CD4-positive, alpha-beta T cell (primary cell): ENCODE measurements at regions of chr3 and their contacts with region 1.

Region 1: GRCh38 chr3:141498598-141499223 is 11.9 kb downstream of the RASA2 start:
- DNase-seq: peak; percentile 64 to 97 (median 78)
- ATAC-seq: peak; percentile 87
- H3K4me3 ChIP-seq: peak overlapping the region; percentile 45
- H3K4me3 Mint-ChIP-seq: peak overlapping the region; percentile 86
- H3K27ac ChIP-seq: peak overlapping the region; percentile 77 to 90
- H3K27ac Mint-ChIP-seq: no peak overlapping the region
- H3K4me1 ChIP-seq: peaks cover 28% of the 10 kb centered on the region
- H3K4me1 Mint-ChIP-seq: peaks cover 69% of the 10 kb centered on the region
- H3K27me3 ChIP-seq: no peaks in the 10 kb centered on the region
- H3K27me3 Mint-ChIP-seq: no peaks in the 10 kb centered on the region
- CTCF ChIP-seq: no peak

Region 2: DNA sequence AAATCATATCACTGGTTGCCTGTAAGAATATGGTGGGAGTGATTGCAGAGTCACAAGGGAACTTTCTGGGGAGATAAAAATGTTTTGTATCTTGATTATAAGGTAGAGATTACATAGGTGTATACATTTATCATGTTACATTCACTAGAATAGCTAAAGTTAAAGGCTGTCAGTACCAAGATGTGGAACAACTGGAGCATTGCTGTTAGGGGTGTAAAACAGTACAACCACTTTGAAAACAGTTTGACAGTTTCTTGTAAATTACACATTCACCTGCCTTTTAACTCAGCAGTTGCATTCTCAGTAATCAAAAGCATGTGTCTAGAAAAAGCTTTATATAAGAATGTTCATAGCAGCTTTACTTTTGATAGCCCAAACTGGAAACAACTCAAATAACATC is 15.7 kb after region 1 on chr3:
- CTCF ChIA-PET with region 1: interaction called, 7 read pairs
- POLR2A ChIA-PET with region 1: interaction called, 16 read pairs
- intact Hi-C with region 1: loop called in 1 of 2 experiments (anchors 2 kb)
- DNase-seq: no peak
- ATAC-seq: no peak
- H3K4me3 ChIP-seq: no peak overlapping the region
- H3K4me3 Mint-ChIP-seq: no peak overlapping the region
- H3K27ac ChIP-seq: no peak overlapping the region
- H3K27ac Mint-ChIP-seq: peak overlapping the region; percentile 54
- H3K4me1 ChIP-seq: peaks cover 13% of the 10 kb centered on the region
- H3K4me1 Mint-ChIP-seq: peaks cover 75% of the 10 kb centered on the region
- H3K27me3 ChIP-seq: no peaks in the 10 kb centered on the region
- H3K27me3 Mint-ChIP-seq: no peaks in the 10 kb centered on the region
- CTCF ChIP-seq: no peak

Region 3: GRCh38 chr3:141523615-141524375 is 25.1 kb after region 1 on chr3:
- CTCF ChIA-PET with region 1: interaction called, 6 read pairs
- POLR2A ChIA-PET with region 1: interaction called, 19 read pairs
- intact Hi-C with region 1: loop called in 1 of 2 experiments (anchors 2 kb)
- DNase-seq: no peak
- ATAC-seq: no peak
- H3K4me3 ChIP-seq: no peak overlapping the region
- H3K4me3 Mint-ChIP-seq: no peak overlapping the region
- H3K27ac ChIP-seq: no peak overlapping the region
- H3K27ac Mint-ChIP-seq: peak overlapping the region; percentile 94
- H3K4me1 ChIP-seq: peaks cover 25% of the 10 kb centered on the region
- H3K4me1 Mint-ChIP-seq: peaks cover 90% of the 10 kb centered on the region
- H3K27me3 ChIP-seq: no peaks in the 10 kb centered on the region
- H3K27me3 Mint-ChIP-seq: no peaks in the 10 kb centered on the region
- CTCF ChIP-seq: no peak

Region 4: GRCh38 chr3:141530133-141530768 is 31.5 kb after region 1 on chr3:
- CTCF ChIA-PET with region 1: no interaction called
- POLR2A ChIA-PET with region 1: interaction called, 22 read pairs
- intact Hi-C with region 1: loop called in 1 of 2 experiments (anchors 2 kb)
- DNase-seq: peak in 8 of 14 experiments; percentile 6 to 71 (median 24)
- ATAC-seq: peak; percentile 81
- H3K4me3 ChIP-seq: peak overlapping the region; percentile 13
- H3K4me3 Mint-ChIP-seq: peak overlapping the region; percentile 86
- H3K27ac ChIP-seq: peak overlapping the region; percentile 51 to 64
- H3K27ac Mint-ChIP-seq: peak overlapping the region; percentile 94
- H3K4me1 ChIP-seq: peaks cover 8% of the 10 kb centered on the region
- H3K4me1 Mint-ChIP-seq: peaks cover 83% of the 10 kb centered on the region
- H3K27me3 ChIP-seq: no peaks in the 10 kb centered on the region
- H3K27me3 Mint-ChIP-seq: no peaks in the 10 kb centered on the region
- CTCF ChIP-seq: no peak

Region 5: GRCh38 chr3:141553055-141553454 is 54.3 kb after region 1 on chr3:
- CTCF ChIA-PET with region 1: interaction called, 4 read pairs
- POLR2A ChIA-PET with region 1: interaction called, 28 read pairs
- intact Hi-C with region 1: loop called in 1 of 2 experiments (anchors 1 kb)
- DNase-seq: peak in 5 of 14 experiments; percentile 7 to 90 (median 71)
- ATAC-seq: peak; percentile 84
- H3K4me3 ChIP-seq: no peak overlapping the region
- H3K4me3 Mint-ChIP-seq: peak overlapping the region; percentile 47
- H3K27ac ChIP-seq: no peak overlapping the region
- H3K27ac Mint-ChIP-seq: peak overlapping the region; percentile 81
- H3K4me1 ChIP-seq: peaks cover 17% of the 10 kb centered on the region
- H3K4me1 Mint-ChIP-seq: peaks cover 63% of the 10 kb centered on the region
- H3K27me3 ChIP-seq: no peaks in the 10 kb centered on the region
- H3K27me3 Mint-ChIP-seq: no peaks in the 10 kb centered on the region
- CTCF ChIP-seq: no peak

Region 6: GRCh38 chr3:141561426-141562034 is 62.8 kb after region 1 on chr3:
- CTCF ChIA-PET with region 1: interaction called, 3 read pairs
- POLR2A ChIA-PET with region 1: interaction called, 13 read pairs
- intact Hi-C with region 1: no loop called
- DNase-seq: peak in 9 of 14 experiments; percentile 14 to 85 (median 39)
- ATAC-seq: peak; percentile 60
- H3K4me3 ChIP-seq: no peak overlapping the region
- H3K4me3 Mint-ChIP-seq: peak overlapping the region; percentile 55
- H3K27ac ChIP-seq: no peak overlapping the region
- H3K27ac Mint-ChIP-seq: peak overlapping the region; percentile 67
- H3K4me1 ChIP-seq: peaks cover 3% of the 10 kb centered on the region
- H3K4me1 Mint-ChIP-seq: peaks cover 40% of the 10 kb centered on the region
- H3K27me3 ChIP-seq: no peaks in the 10 kb centered on the region
- H3K27me3 Mint-ChIP-seq: no peaks in the 10 kb centered on the region
- CTCF ChIP-seq: peak; percentile 98